ENCODE measurements at regions of chr3 and their contacts with region 1.

Region 1: GRCh38 chr3:4906107-4906621 is 73.1 kb upstream of the BHLHE40 start:
- DNase-seq: peak; percentile 61
- H3K4me3 Mint-ChIP-seq: no peak overlapping the region
- H3K27ac Mint-ChIP-seq: no peak overlapping the region
- H3K4me1 Mint-ChIP-seq: peaks cover 72% of the 10 kb centered on the region
- H3K27me3 Mint-ChIP-seq: no peaks in the 10 kb centered on the region

Region 2: DNA sequence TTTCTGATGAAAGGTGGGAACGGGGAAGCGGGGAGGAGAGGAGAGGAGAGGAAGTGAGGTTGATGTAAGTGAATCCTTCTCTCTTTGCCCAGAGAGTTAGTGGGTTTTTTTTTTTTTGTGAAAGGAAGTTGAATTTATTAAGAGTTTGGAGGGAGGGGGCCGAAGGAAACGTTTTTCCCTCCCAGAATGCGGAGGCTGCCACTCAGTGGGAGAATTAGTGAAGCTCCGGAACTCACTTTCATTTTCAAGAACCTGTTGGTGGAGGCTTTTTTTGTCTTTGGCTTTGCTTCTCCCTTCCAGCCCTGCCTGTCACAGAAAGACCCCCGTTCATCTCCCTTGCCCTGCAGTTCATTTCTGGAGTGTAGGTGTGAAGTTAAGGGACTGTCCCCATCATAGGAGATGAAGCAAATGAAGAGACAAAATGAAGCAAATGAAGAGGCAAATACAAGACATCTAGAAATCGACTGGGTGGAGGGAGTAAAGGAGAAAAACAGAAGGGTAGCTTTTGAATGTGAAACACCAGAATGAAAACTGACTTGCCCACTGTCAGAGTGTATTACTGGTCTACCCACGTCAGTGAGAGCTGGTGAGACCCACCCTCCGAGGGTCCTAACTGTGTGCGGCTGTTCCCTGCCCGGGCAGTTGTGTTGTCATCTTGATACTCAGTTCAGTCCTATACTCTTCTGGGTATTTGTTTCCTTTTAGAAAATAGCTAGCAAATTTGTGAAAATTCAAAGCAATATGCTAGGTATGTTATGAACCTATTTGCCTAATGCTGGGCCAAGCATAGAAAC is 321.5 kb before region 1 on chr3:
- CTCF ChIA-PET with region 1: no interaction called
- intact Hi-C with region 1: loop called (anchors 5 kb)
- DNase-seq: peak; percentile 72
- H3K4me3 Mint-ChIP-seq: peak overlapping the region; percentile 70
- H3K27ac Mint-ChIP-seq: peak overlapping the region; percentile 83
- H3K4me1 Mint-ChIP-seq: peaks cover 61% of the 10 kb centered on the region
- H3K27me3 Mint-ChIP-seq: no peaks in the 10 kb centered on the region

Region 3: GRCh38 chr3:4826237-4827100 is 79.7 kb before region 1 on chr3:
- CTCF ChIA-PET with region 1: interaction called, 3 read pairs
- intact Hi-C with region 1: loop called (anchors 1 kb)
- DNase-seq: no peak
- H3K4me3 Mint-ChIP-seq: no peak overlapping the region
- H3K27ac Mint-ChIP-seq: peak overlapping the region; percentile 57
- H3K4me1 Mint-ChIP-seq: peaks cover 93% of the 10 kb centered on the region
- H3K27me3 Mint-ChIP-seq: no peaks in the 10 kb centered on the region

Region 4: GRCh38 chr3:4845882-4846281 is 60.3 kb before region 1 on chr3:
- CTCF ChIA-PET with region 1: interaction called, 10 read pairs
- intact Hi-C with region 1: loop called (anchors 1 kb)
- DNase-seq: no peak
- H3K4me3 Mint-ChIP-seq: no peak overlapping the region
- H3K27ac Mint-ChIP-seq: peak overlapping the region; percentile 93
- H3K4me1 Mint-ChIP-seq: peaks cover 94% of the 10 kb centered on the region
- H3K27me3 Mint-ChIP-seq: no peaks in the 10 kb centered on the region

Region 5: DNA sequence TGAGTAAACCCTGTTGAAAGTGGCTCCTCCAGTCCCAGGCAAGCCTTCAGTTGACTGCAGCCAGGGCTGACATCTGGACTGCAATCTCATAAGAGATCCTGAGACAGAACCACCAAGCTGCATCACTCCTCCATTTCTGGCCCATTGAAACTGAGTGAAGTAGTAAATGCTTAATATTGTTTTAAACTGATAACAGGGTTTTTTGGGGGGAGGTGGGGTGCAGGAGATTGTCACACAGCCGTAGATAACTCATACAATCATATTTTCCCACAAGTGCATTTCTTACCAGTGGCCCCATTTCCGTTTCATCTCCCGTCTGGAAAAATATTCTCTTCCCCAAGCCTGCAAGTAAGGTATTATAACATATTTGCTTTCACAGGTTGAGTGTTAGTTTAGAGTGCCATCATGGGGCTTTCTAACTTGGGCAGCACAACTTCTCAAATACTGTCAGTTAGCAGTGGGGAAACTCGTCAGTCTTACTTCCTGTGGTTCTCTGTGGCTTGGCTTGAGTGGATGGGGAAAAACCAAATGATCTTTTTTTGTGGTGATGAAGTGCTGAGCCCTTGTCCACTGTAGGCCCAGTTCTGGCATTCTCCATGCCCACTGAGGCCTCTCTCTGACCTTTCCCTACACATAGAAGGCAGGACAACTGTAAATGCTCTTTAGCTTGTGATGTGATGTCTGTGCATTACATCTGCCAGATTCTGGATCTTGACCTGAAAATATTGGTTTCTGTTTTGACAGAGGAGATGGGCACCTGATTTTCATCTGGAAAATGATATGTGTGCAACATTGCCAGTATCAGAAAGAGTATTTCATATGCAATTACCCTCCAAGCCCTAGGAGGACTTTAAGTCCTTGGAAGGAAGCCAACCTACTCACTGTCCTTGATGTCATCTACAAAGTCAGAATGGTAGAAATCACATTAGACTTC is 17.0 kb before region 1 on chr3:
- CTCF ChIA-PET with region 1: interaction called, 5 read pairs
- intact Hi-C with region 1: loop called (anchors 1 kb)
- DNase-seq: peak; percentile 61
- H3K4me3 Mint-ChIP-seq: no peak overlapping the region
- H3K27ac Mint-ChIP-seq: peak overlapping the region; percentile 85
- H3K4me1 Mint-ChIP-seq: peaks cover 40% of the 10 kb centered on the region
- H3K27me3 Mint-ChIP-seq: no peaks in the 10 kb centered on the region

Region 6: GRCh38 chr3:5006755-5007202 is 100.6 kb after region 1 on chr3:
- CTCF ChIA-PET with region 1: no interaction called
- intact Hi-C with region 1: loop called (anchors 1 kb)
- DNase-seq: peak; percentile 95
- H3K4me3 Mint-ChIP-seq: peak overlapping the region; percentile 44
- H3K27ac Mint-ChIP-seq: peak overlapping the region; percentile 76
- H3K4me1 Mint-ChIP-seq: peaks cover 42% of the 10 kb centered on the region
- H3K27me3 Mint-ChIP-seq: peaks cover 7% of the 10 kb centered on the region

Region 7: DNA sequence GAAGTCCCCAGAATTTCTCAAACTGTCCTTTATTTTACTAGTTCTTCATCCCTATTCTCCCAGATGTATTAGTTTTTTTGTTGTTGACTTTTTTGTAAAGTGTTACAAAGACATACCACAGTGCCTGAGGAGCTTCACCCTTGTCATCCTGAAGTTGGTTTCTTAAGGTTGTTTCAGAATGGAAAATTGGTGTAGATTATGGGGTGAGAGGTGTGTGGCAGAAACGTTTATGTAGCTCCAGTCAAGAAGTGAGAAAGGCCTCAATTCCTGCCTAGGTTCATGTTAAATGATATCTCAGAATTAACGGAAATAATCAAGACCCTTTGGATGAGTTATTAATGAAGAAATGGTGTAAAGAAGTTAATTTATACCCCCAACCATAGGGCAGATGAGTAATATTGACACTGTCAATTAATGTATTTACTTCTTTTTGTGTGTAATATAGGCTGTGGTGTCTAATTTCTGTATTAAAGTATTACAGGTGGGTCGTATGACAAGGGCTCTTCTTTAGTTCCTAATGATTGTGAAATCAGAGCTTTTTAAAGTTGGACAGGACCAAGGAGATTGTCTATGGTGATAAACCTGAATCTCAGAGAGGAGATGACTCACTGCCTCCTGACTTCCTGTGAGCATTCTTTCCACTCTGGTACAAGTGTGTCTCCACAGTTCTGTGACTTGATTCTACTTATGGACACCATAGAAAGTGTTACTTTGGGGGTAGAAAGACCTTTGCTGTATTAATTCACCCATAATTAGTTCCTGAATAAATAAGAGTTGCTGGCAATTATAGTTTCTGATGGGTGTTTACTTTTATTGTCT is 288.4 kb after region 1 on chr3:
- CTCF ChIA-PET with region 1: no interaction called
- intact Hi-C with region 1: loop called (anchors 1 kb)
- DNase-seq: peak; percentile 66
- H3K4me3 Mint-ChIP-seq: peak overlapping the region; percentile 25
- H3K27ac Mint-ChIP-seq: peak overlapping the region; percentile 98
- H3K4me1 Mint-ChIP-seq: peaks cover 84% of the 10 kb centered on the region
- H3K27me3 Mint-ChIP-seq: no peaks in the 10 kb centered on the region

Region 8: GRCh38 chr3:5411786-5412185 is 505.6 kb after region 1 on chr3:
- CTCF ChIA-PET with region 1: no interaction called
- intact Hi-C with region 1: no loop called
- DNase-seq: no peak
- H3K4me3 Mint-ChIP-seq: no peak overlapping the region
- H3K27ac Mint-ChIP-seq: no peak overlapping the region
- H3K4me1 Mint-ChIP-seq: no peaks in the 10 kb centered on the region
- H3K27me3 Mint-ChIP-seq: no peaks in the 10 kb centered on the region

Measured in activated naive CD4-positive, alpha-beta T cell treated with anti-CD3 and anti-CD28 coated beads for 36 hours (primary cell).